Head of caudate nucleus (tissue), 42 donors: ENCODE measurements at regions of chr18 and their contacts with region 1.

Region 1: DNA sequence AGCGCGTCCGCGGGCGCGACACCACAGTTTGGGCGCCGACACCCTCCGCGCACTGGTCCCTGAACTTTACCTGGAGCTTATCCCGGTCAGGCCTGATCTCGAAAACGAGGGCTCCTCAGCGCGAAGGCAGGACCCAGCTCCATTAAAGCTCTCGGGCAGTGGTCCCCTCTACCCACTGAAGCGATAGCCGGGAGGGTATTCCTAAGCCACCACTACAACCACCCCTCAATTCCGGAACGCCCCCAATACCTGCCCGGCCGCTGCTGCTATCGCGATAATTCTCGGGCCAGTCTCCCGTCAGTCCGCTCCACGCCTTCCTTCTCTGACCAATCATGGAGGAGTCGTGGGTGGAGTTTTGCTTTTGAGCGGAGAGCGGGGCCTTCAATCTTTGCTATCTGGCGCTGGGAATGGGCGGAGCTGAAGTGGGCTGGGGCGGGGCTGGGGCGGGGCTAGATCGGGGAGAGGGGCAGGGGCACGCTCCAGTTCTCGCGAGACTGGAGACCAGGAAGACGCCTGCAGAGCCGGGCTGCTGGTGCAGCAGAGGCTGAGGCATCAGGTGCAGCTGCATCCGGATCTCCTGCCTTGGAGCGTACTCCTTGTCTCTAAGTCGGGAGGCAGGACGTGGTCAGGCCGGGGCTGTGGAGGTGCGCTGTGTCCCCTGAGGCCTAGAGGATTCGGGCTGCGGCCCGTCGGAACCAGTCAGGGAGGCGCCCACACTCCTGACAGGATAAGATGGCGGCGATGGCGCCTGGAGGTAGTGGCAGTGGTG is at the starts of genes PIGN and RELCH:
- DNase-seq: peak; percentile 84 to 99 (median 97)

Region 2: DNA sequence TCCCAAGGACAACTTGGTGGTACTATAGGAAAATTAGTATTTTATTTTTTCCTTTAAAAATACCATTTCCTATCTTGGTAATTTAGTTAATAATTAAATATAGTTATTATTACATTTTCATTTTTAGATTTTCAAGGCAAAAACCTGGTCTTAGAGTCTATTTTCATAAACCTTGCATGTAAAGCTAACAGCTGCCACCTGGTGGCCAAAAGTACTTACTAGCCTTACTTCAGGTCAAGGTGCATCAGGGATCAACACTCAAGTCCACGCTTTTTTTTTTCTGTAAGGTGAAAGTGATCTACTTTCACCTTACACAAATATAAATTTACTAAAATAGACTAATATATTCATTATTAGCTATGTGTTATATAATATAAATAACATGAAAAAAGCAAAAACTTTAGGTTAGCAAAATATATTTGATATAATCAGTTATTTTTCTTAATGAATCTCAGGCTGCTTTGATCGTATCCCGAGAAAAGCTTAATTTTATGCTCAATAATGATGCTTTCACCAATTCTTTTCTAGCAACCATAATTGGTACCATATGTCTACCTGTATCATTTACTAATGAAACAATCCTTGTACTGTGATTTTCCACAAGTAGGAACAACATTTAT is 62.6 kb after region 1 on chr18:
- intact Hi-C with region 1: loop called (anchors 5 kb)
- DNase-seq: peak; percentile 8 to 90 (median 71)

Region 3: GRCh38 chr18:62522504-62523254 is 335.7 kb after region 1 on chr18 and contains the start of gene ZCCHC2:
- intact Hi-C with region 1: loop called (anchors 10 kb)
- DNase-seq: peak; percentile 93 to 100 (median 99)

Region 4: GRCh38 chr18:62584241-62585120 is 397.5 kb after region 1 on chr18:
- intact Hi-C with region 1: loop called (anchors 5 kb)
- DNase-seq: peak; percentile 77 to 95 (median 89)